ENCODE measurements at regions of chr9 and their contacts with region 1.

Region 1: DNA sequence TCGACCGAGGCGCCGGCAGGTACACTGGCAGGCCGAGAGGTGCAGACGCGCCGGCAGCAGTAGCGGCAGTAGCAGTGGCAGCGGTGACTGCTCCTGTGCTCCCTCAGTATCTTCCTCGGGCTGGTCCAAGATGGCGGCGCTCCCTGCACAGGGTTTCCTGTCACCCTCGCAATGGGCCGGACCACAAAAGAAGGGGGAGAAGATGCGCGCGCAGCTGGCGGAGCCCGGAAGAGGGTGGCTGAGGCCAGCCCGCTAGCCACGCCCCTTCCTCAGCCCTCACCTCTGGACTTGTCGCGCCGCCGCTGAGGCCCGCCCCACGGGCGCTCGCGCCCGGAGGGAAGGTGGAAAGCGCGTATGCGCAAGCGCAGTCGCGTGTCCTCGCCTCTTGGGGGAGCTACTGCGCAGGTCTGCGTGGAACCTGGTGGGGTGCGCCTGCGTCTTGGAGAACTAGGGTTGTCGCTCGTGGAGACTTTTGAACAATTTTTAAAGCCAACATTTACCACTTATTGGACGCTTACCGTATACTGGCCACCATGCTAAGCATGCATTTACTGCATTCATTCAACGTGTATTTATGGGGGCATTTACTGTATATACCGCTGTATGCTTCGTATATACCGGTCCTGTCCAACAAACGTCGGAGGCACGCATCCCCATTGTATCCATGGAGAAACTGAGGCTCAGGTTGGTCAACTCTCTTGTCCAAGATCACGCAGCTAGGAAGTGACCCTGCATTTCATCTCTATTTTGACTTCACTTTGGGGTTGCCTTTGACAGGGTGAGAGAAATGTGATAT is at the start of gene RAB14:
- DNase-seq: peak; percentile 100
- H3K4me3 Mint-ChIP-seq: peak within 1 kb of the TSS; percentile 96
- H3K27ac Mint-ChIP-seq: peak within 1 kb of the TSS; percentile 92
- H3K4me1 Mint-ChIP-seq: peaks cover 61% of the 10 kb centered on the region
- H3K27me3 Mint-ChIP-seq: no peaks in the 10 kb centered on the region
- total RNA-seq, gene RAB14: 64.8 and 69.3 TPM in 2 replicates

Region 2: GRCh38 chr9:120714088-120714845 is 487.7 kb before region 1 on chr9 and contains the start of gene MEGF9:
- intact Hi-C with region 1: loop called (anchors 1 kb)
- DNase-seq: peak; percentile 96
- H3K4me3 Mint-ChIP-seq: peak within 1 kb of the TSS; percentile 92
- H3K27ac Mint-ChIP-seq: peak within 1 kb of the TSS; percentile 82
- H3K4me1 Mint-ChIP-seq: peaks cover 41% of the 10 kb centered on the region
- H3K27me3 Mint-ChIP-seq: no peaks in the 10 kb centered on the region
- total RNA-seq, gene MEGF9: 5.4 and 5.9 TPM in 2 replicates

Region 3: DNA sequence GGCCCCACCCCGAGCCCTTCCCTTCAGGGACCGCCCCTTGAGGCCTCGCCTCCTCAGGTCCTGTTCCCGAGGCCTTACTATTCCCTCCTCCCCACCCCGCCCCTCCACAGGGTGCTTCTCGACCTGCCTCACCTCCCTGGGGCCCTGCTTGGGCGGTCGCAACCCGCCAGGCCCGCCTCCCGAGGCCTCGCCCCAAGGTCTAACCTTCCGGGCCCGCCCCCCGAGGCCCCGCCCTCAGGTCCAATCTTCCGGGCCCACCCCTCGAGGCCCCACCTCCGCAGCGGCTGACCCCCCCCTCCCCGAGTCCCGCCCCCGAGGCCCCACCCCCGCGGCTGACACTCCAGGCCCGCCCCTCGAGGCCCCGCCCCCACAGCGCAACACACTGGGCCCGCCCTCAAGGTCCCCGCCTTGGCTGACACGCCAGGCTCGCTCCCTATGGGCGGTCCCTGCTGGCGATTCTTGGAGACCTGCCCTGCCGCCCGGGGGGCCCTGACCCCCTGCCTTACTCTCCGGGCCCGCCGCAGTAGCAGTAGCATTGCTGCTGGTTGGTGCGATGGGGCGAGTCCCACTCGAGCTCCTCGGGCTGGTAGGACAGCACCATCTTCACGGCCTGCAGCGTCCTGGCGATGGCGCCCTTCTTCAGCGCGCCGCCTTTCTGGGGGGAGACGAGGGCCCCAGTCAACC is 333.1 kb before region 1 on chr9:
- intact Hi-C with region 1: loop called (anchors 1 kb)
- DNase-seq: peak; percentile 93
- H3K4me3 Mint-ChIP-seq: peak overlapping the region; percentile 88
- H3K27ac Mint-ChIP-seq: peak overlapping the region; percentile 91
- H3K4me1 Mint-ChIP-seq: peaks cover 48% of the 10 kb centered on the region
- H3K27me3 Mint-ChIP-seq: no peaks in the 10 kb centered on the region

Region 4: GRCh38 chr9:121074635-121075385 is 127.1 kb before region 1 on chr9 and contains the start of gene CNTRL:
- intact Hi-C with region 1: loop called (anchors 1 kb)
- DNase-seq: peak; percentile 90
- H3K4me3 Mint-ChIP-seq: peak within 1 kb of the TSS; percentile 100
- H3K27ac Mint-ChIP-seq: peak within 1 kb of the TSS; percentile 91
- H3K4me1 Mint-ChIP-seq: peaks cover 57% of the 10 kb centered on the region
- H3K27me3 Mint-ChIP-seq: no peaks in the 10 kb centered on the region
- total RNA-seq, gene CNTRL: 69.9 and 74.2 TPM in 2 replicates

Region 5: GRCh38 chr9:121156263-121156731 is 45.6 kb before region 1 on chr9:
- intact Hi-C with region 1: loop called (anchors 2 kb)
- DNase-seq: peak; percentile 6
- H3K4me3 Mint-ChIP-seq: peak overlapping the region; percentile 50
- H3K27ac Mint-ChIP-seq: peak overlapping the region; percentile 92
- H3K4me1 Mint-ChIP-seq: peaks cover 50% of the 10 kb centered on the region
- H3K27me3 Mint-ChIP-seq: no peaks in the 10 kb centered on the region

Region 6: DNA sequence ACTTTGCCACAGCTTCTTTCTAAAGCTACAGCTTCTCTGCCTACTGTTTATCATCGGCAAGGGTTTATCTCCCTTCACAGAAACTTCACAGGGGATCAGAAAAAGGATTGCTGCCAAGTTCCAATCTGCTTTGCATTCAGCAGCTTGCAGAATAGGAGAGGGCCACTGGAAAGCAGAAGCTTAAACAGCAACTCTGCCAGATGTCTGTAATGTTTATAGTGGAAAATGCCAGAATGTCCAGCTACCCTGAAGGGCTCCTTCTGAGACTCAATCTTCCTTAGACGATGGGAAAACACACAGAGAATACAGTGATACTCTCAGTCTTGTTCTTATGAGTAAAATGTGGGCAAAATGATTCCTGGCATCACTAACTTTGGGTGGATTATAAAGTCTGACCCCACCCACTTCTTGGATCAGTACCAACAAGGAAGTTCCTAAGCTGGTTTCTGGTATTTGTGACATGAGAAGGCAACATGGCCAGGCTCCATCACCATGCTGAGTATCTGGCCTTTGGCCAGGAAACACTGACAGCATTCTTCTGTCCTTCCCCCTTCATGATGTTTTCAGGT is 149.1 kb after region 1 on chr9:
- intact Hi-C with region 1: loop called (anchors 1 kb)
- DNase-seq: no peak
- H3K4me3 Mint-ChIP-seq: no peak overlapping the region
- H3K27ac Mint-ChIP-seq: no peak overlapping the region
- H3K4me1 Mint-ChIP-seq: peaks cover 46% of the 10 kb centered on the region
- H3K27me3 Mint-ChIP-seq: no peaks in the 10 kb centered on the region

Region 7: DNA sequence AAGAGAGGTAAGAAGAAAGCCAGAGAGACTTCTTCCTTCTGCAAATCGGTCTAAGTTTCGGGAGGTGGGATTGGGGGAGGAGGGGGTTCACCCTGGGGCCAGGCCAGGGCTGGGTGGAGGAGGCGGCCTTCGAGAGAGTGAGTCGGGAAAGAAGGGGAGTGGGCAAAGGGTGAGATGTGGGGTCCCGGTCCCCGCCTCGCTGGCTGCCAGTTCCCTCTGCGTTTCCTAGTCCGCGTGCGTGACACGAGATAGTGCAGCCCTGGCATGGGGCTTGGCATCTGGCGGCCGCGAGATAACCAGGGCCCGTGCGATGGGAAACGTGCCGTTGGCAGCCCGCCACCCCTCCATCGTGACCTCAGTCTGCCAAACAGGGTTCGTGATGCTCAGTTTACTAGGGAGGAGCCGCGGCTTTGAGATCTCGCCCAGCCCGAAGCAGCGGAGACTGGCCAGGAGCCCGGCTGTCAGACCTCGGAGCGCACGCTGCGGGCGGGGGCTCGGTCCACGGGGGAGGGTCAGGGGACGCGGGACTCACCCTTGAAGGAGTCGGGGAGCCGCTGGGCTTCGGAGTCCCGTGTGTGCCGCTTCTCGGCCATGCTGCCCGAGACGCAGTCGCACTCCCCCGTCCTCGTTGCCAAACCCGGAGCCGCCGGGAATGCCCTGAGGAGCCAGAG is 167.8 kb after region 1 on chr9 and contains the start of gene STOM:
- intact Hi-C with region 1: loop called (anchors 1 kb)
- DNase-seq: no peak
- H3K4me3 Mint-ChIP-seq: peak within 1 kb of the TSS; percentile 87
- H3K27ac Mint-ChIP-seq: peak within 1 kb of the TSS; percentile 96
- H3K4me1 Mint-ChIP-seq: peaks cover 77% of the 10 kb centered on the region
- H3K27me3 Mint-ChIP-seq: no peaks in the 10 kb centered on the region
- total RNA-seq, gene STOM: 51.1 and 51.7 TPM in 2 replicates